ENCODE measurements at regions of chr1 and their contacts with region 1.

Region 1: DNA sequence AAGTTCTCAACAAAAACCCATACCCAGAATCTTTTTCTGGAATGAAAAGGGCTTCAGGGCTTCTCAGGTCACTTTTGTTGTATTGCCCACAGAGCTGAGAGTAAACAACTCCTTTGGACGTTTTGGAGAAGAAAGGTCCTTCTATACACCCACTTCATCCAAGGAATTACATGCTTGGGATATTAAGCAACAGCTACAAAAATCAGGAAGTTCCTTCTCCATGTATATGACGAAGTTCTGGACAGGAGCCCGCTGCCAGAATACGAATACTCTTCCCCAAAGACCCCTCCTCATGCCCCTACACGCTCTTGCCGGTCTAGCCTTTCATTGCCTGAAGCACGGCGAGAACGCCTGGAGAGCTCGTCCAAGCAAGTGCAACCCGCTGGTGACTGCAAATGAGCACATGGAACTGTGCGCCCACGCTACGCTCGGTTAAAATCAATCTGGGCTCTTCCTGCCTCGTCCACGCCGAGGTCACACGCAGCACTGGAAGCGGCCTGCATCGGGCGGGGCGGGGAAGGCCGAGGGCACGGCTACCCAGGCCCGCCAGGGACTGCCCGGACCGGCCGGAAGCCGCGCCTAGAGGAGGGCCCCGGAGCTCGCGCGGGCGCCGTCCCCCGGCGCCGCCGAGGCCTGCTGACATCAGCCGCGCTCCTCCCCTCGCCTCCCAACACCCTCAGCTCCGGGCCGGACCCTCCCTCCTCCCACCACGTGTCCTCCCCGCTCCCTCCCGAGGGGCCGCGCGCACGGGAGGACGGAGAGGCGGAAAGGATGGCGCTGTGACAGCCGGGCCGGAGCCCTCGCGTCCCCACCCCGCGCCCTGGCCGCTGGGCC is at the start of gene POGK:
- DNase-seq: peak; percentile 83
- ATAC-seq: peak; percentile 92
- H3K4me3 Mint-ChIP-seq: peak within 1 kb of the TSS; percentile 91
- H3K27ac Mint-ChIP-seq: peak within 1 kb of the TSS; percentile 97
- H3K4me1 Mint-ChIP-seq: peaks cover 23% of the 10 kb centered on the region
- H3K27me3 Mint-ChIP-seq: peaks cover 3% of the 10 kb centered on the region
- CTCF ChIP-seq: no peak
- total RNA-seq, gene POGK: 33.1 to 36.7 TPM (median 36.1 TPM) in 3 replicates

Region 2: GRCh38 chr1:166763318-166763717 is 75.7 kb before region 1 on chr1:
- CTCF ChIA-PET with region 1: no interaction called
- POLR2A ChIA-PET with region 1: no interaction called
- DNase-seq: no peak
- ATAC-seq: no peak
- H3K4me3 Mint-ChIP-seq: no peak overlapping the region
- H3K27ac Mint-ChIP-seq: no peak overlapping the region
- H3K4me1 Mint-ChIP-seq: peaks cover 13% of the 10 kb centered on the region
- H3K27me3 Mint-ChIP-seq: no peaks in the 10 kb centered on the region
- CTCF ChIP-seq: no peak

Region 3: GRCh38 chr1:166859597-166859996 is 20.6 kb after region 1 on chr1:
- CTCF ChIA-PET with region 1: no interaction called
- POLR2A ChIA-PET with region 1: no interaction called
- DNase-seq: no peak
- ATAC-seq: peak; percentile 32; the same call in 1 of the 2 replicates
- H3K4me3 Mint-ChIP-seq: no peak overlapping the region
- H3K27ac Mint-ChIP-seq: peak overlapping the region; percentile 54; the same call in 1 of the 2 replicates
- H3K4me1 Mint-ChIP-seq: peaks cover 30% of the 10 kb centered on the region
- H3K27me3 Mint-ChIP-seq: no peaks in the 10 kb centered on the region
- CTCF ChIP-seq: no peak

Region 4: GRCh38 chr1:166875734-166876539 is 37.0 kb after region 1 on chr1 and contains the start of gene TADA1:
- CTCF ChIA-PET with region 1: interaction called, 4 read pairs
- POLR2A ChIA-PET with region 1: interaction called, 11 read pairs
- DNase-seq: peak; percentile 99
- ATAC-seq: peak; percentile 92
- H3K4me3 Mint-ChIP-seq: peak within 1 kb of the TSS; percentile 94
- H3K27ac Mint-ChIP-seq: peak within 1 kb of the TSS; percentile 97
- H3K4me1 Mint-ChIP-seq: peaks cover 38% of the 10 kb centered on the region
- H3K27me3 Mint-ChIP-seq: peaks cover 2% of the 10 kb centered on the region; the same call in 1 of the 2 replicates
- CTCF ChIP-seq: no peak
- total RNA-seq, gene TADA1: 16.6 to 18.8 TPM (median 17.5 TPM) in 3 replicates